ENCODE measurements at regions of chr19 and their contacts with region 1.

Region 1: DNA sequence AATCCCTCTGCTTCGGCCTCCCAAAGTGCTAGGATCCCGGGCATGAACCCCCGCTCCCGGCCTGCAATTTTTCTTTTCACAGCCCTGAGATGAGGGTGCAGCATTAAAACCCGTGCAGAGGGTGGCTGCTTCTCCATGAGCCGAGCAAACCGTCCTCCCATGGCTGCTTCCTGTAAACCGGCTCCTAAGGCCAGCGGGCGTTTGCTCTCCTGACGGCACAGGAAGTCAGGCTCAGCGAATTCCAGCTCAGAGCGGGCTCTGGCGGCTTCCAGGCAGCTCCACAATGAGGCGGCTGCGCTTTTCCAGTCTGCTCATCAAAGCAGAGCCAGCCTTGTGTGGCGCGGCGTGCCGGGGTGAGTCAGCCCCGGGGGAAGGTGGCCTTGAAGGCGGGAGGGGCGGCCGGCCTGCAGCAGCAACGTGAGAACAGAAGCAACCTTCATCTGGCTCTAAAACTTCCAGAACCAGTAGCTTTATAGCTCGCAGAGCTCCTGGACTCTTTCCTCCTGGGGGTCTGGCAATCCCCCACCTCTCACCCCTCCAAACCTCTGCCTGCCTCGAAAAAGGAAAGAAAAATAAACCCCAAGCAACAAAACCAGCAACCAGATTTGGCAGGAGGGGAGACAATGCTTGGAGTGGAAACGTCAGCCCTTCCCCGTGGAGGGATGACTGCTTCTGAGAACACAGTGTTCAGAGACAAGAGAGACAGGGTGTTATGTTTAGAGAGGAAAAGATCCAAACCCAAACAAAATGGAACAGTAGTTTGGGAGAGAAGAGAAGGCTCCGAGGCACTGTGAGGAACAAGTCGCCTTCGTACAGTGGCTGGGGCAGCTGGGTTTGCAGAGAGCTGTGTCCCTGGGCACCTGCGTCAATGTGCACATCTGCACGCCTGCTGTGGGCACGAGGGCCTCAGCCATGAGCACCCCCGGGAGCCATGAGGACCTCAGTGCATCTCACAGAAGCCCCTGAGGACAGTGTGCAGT is 67.8 kb downstream of the GADD45B start:
- DNase-seq: peak; percentile 99
- H3K4me3 ChIP-seq: peak overlapping the region; percentile 10 to 36 (median 28)
- H3K27ac ChIP-seq: peak overlapping the region; percentile 89 to 98 (median 94)
- H3K4me1 ChIP-seq: peaks cover 0 to 73% (median 69%) of the 10 kb centered on the region in 4 donors
- H3K27me3 ChIP-seq: no peaks in the 10 kb centered on the region
- CTCF ChIP-seq: no peak
- EP300 ChIP-seq: peak; percentile 89 to 98 (median 93)
- POLR2A ChIP-seq: peak; percentile 43 to 46

Region 2: DNA sequence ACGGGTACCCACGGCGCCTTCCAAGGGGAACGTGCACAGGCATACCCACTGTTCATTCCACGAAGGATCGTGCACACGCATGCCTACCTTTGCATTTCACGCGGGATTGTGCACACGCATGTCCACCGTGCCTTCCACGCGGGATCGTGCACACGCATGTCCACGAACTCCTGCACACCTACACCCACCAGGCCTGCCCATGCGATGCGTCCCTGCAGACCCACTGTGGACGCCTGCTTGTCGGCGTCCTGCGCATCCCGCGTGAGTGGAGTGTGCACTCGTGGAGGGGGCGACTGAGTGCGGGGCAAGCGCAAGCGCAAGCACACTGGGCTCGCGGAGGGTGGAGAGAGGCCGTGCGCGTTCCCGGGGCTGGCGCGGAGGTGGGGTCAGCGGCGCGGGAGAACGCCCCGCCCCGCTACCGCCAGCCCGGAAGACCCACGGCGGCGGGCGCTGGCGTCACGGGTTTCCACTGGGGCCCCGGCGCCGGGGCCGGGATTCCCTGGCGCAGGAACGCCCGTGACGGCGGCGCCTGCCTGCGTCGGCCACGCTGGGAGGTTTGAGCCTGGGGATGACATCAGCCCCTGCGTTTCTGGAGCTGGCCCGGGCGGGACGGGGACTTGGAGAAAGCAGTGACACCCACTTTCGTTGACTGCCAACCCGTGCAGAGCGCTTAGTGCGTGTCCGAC is 49.2 kb before region 1 on chr19:
- intact Hi-C with region 1: loop called (anchors 2 kb)
- DNase-seq: peak; percentile 94
- H3K4me3 ChIP-seq: peak overlapping the region; percentile 34 to 62 (median 52)
- H3K27ac ChIP-seq: peak overlapping the region; percentile 77 to 94 (median 84)
- H3K4me1 ChIP-seq: peaks cover 0 to 38% (median 27%) of the 10 kb centered on the region in 4 donors
- H3K27me3 ChIP-seq: no peaks in the 10 kb centered on the region
- CTCF ChIP-seq: no peak
- EP300 ChIP-seq: peak in 2 of 4 donors; percentile 38 to 59
- POLR2A ChIP-seq: no peak

Region 3: DNA sequence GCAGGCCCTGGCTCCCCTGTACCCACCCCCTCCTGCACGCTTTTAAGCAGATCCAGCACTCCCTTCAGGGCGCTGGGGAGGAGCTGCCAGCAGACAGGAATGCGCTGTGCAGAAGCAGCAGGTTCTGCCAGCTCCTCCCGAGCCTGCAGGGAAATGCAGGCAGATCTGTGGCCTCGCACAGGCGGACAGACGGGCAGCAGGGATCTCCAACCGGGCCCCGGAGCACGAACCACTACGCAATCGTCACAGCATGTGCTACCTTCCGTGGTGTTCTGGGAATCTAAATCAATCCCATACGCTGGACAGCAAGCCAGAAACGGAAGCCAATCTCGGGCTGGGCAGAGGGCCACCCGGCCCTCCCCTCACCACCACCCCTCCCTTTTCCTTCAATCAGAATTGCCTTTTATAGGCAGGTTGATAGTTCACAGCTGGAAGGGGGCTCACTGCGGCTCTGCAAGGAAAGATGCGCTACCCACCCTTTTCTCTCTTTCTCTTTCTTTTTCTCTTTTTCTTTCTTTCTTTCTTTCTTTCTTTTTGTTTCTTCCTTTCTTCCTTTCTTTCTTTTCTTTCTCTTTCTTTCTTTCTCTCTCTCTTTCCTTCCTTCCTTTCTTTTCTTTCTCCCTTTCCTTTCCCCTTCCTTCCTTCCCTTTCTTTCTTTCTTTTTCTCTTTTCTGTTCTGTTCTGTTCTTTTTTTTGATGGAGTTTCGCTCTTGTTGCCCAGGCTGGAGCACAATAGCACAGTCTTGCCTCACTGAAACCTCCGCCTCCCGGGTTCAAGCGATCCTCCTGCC is 58.8 kb after region 1 on chr19:
- intact Hi-C with region 1: loop called (anchors 2 kb)
- DNase-seq: peak; percentile 98
- H3K4me3 ChIP-seq: peak overlapping the region; percentile 8 to 42 (median 32)
- H3K27ac ChIP-seq: peak overlapping the region; percentile 85 to 94 (median 93)
- H3K4me1 ChIP-seq: peaks cover 0 to 55% (median 47%) of the 10 kb centered on the region in 4 donors
- H3K27me3 ChIP-seq: no peaks in the 10 kb centered on the region
- CTCF ChIP-seq: peak in 1 of 4 experiments; percentile 18
- EP300 ChIP-seq: peak; percentile 76 to 99 (median 88)
- POLR2A ChIP-seq: peak in 1 of 2 donors; percentile 59